MCF 10A (cell line): ENCODE measurements at regions of chr6 and their contacts with region 1.

Region 1: DNA sequence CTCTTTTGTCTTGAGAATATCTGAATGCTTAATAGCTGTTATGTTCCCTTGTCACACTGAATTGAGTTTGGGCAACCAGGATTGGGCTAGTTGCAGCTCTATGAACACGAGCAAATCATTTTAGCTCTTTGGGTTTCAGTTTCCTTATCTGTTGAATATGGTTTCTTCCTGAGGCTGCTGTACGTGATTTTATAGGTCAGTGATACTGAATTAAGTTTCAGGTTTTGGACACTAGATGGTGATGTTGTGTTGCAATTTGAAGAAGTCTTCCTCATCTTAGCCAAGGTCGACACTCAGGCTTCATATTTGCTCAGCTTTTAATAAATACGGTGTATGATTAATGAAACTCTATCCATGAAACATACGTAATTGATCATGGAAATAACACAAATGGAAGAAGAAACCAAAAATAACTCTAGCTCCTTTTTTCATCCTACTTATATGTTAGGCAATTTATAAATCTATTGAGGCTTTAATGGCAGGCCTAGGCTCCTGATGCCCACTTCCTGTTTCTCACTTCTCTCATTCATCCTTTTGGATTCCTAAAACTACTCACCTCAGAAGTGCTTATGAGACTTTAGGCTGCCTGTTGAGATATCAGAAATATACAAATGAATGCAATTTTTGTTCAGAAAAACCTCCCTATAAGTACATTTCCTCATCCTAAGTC is 354.1 kb upstream of the MAP3K7 start:
- DNase-seq: peak; percentile 68
- H3K4me3 Mint-ChIP-seq: peak overlapping the region; percentile 43
- H3K27ac Mint-ChIP-seq: no peak overlapping the region
- H3K4me1 Mint-ChIP-seq: peaks cover 6% of the 10 kb centered on the region
- H3K27me3 Mint-ChIP-seq: no peaks in the 10 kb centered on the region
- CTCF ChIP-seq: peak; percentile 51

Region 2: GRCh38 chr6:90846824-90847223 is 94.1 kb before region 1 on chr6:
- CTCF ChIA-PET with region 1: interaction called, 9 read pairs
- POLR2A ChIA-PET with region 1: interaction called, 3 read pairs
- intact Hi-C with region 1: loop called (anchors 5 kb)
- DNase-seq: peak; percentile 80
- H3K4me3 Mint-ChIP-seq: no peak overlapping the region
- H3K27ac Mint-ChIP-seq: no peak overlapping the region
- H3K4me1 Mint-ChIP-seq: peaks cover 17% of the 10 kb centered on the region
- H3K27me3 Mint-ChIP-seq: no peaks in the 10 kb centered on the region
- CTCF ChIP-seq: no peak

Region 3: DNA sequence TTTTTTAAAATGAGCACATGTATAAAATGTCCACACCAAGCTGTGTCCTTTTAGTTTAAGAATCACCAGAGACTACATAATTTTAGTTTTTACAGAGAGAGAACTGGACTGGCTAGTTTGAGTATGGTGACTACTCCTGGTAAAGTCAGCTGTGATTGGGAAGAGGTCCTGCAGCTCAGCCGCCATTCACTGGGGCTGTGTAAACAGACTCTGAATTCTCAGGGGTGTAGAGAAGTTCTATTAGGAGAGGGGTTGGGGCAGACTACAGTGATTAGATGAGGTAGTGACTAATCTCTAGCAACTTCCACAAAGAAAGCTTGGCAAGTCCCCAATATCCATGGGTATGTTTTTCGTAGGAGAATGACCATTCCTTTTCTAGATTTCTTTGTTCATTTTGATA is 12.9 kb before region 1 on chr6:
- CTCF ChIA-PET with region 1: interaction called, 34 read pairs
- POLR2A ChIA-PET with region 1: no interaction called
- intact Hi-C with region 1: no loop called
- DNase-seq: no peak
- H3K4me3 Mint-ChIP-seq: no peak overlapping the region
- H3K27ac Mint-ChIP-seq: no peak overlapping the region
- H3K4me1 Mint-ChIP-seq: no peaks in the 10 kb centered on the region
- H3K27me3 Mint-ChIP-seq: peaks cover 41% of the 10 kb centered on the region
- CTCF ChIP-seq: no peak

Region 4: DNA sequence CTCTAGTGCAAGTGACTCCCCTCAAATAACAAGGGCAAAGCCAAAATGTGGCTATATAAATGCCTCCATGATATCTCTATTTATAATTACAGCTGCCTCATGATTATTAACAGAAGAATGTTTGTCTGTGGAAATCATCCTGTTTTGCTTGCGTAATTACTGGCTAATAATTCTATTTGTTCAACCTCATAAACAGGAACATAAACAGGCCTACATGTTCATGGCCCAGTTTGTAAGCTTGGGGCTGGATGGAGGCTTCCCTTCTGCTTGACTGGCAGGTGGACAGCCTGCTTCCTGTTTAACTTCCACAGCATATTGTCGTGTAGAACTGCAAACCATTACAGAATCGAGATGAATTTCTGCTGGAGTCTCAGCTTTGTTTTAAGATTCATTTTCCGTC is 411.9 kb after region 1 on chr6:
- CTCF ChIA-PET with region 1: no interaction called
- POLR2A ChIA-PET with region 1: no interaction called
- intact Hi-C with region 1: no loop called
- DNase-seq: peak; percentile 2
- H3K4me3 Mint-ChIP-seq: no peak overlapping the region
- H3K27ac Mint-ChIP-seq: no peak overlapping the region
- H3K4me1 Mint-ChIP-seq: no peaks in the 10 kb centered on the region
- H3K27me3 Mint-ChIP-seq: no peaks in the 10 kb centered on the region
- CTCF ChIP-seq: no peak